ENCODE measurements at regions of chr13 and their contacts with region 1.

Region 1: DNA sequence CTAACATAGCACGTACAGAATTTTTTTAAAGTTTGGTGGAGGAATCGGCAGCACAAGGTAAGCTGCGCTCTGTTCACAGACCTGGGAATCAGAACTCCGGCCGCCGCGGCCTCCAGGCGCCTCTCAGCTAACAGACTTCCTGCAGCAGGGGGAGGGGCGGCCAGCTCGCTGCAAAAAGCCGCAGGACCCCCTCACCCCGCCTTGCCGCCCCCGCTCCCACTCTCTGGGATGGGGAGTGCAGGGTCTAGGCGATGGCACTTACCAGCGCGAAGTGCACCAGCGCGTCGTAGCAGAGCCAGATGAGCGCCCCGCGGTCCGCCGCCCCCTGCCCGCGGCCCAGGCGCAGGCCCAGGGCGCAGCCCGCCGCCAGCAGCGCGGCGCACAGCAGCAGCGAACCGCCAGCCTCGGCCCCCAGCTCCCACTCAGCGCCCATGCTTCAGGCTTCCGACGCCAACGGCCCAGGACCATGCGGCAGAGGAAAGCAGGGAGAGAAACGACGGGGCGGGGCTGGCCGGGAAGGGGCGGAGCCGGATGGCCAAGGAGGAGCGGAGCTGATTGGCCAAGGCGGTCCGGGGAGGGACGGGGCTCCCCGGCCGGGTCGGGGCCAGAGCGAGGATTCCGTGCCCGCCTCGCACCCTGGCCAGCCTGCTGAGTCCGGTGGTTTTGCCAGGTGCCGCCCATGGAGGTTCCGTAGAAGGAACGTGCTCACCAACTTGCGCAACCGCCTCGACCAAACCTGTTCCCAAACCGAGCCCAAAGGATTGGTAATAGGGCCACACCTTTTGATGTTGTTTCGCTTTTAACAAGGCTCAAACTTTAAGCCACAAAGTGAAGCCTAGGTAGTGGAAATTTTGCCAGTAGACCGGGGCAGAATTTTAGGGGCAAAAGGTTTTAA is at the start of gene EBPL:
- DNase-seq: peak; percentile 90 to 91
- ATAC-seq: peak; percentile 92 to 95
- H3K4me3 ChIP-seq: peak within 1 kb of the TSS; percentile 63 to 81 (median 72)
- H3K27ac ChIP-seq: peak within 1 kb of the TSS; percentile 76 to 89 (median 84)
- H3K4me1 ChIP-seq: peaks cover 13 to 15% of the 10 kb centered on the region in 2 donors
- H3K27me3 ChIP-seq: no peaks in the 10 kb centered on the region
- CTCF ChIP-seq: no peak
- POLR2A ChIP-seq: peak in 1 of 2 donors; percentile 40
- total RNA-seq, gene EBPL: 3.8 to 11.0 (median 8.8) TPM

Region 2: GRCh38 chr13:49731766-49732165 is 40.5 kb after region 1 on chr13:
- in situ Hi-C with region 1: no loop called
- intact Hi-C with region 1: loop called (anchors 5 kb)
- DNase-seq: no peak
- ATAC-seq: peak; percentile 73 to 79
- H3K4me3 ChIP-seq: no peak overlapping the region
- H3K27ac ChIP-seq: peak overlapping the region; percentile 66 to 86 (median 72)
- H3K4me1 ChIP-seq: peaks cover 23 to 32% of the 10 kb centered on the region in 2 donors
- H3K27me3 ChIP-seq: no peaks in the 10 kb centered on the region
- CTCF ChIP-seq: no peak
- POLR2A ChIP-seq: no peak

Region 3: GRCh38 chr13:49784886-49785570 is 93.8 kb after region 1 on chr13:
- in situ Hi-C with region 1: loop called in 2 of 4 experiments (anchors 10 kb)
- intact Hi-C with region 1: no loop called
- DNase-seq: peak; percentile 19
- ATAC-seq: peak; percentile 93 to 95
- H3K4me3 ChIP-seq: no peak overlapping the region
- H3K27ac ChIP-seq: peak overlapping the region; percentile 66 to 80 (median 72)
- H3K4me1 ChIP-seq: peaks cover 82 to 85% of the 10 kb centered on the region in 2 donors
- H3K27me3 ChIP-seq: no peaks in the 10 kb centered on the region
- CTCF ChIP-seq: no peak
- POLR2A ChIP-seq: no peak

Measured in gastrocnemius medialis (tissue), 4 donors.